Right lobe of liver (tissue), 6 donors: ENCODE measurements at regions of chr2 and their contacts with region 1.

Region 1: GRCh38 chr2:238449909-238450417 is 23.2 kb downstream of the ASB1 start:
- DNase-seq: peak; percentile 70 to 89 (median 86)
- ATAC-seq: peak; percentile 92 to 97 (median 95)
- H3K4me3 ChIP-seq: no peak overlapping the region
- H3K27ac ChIP-seq: peak overlapping the region in 2 of 3 donors; percentile 26 to 59
- H3K4me1 ChIP-seq: peaks cover 0 to 21% (median 9%) of the 10 kb centered on the region in 4 donors
- H3K27me3 ChIP-seq: no peaks in the 10 kb centered on the region
- CTCF ChIP-seq: no peak
- POLR2A ChIP-seq: peak; percentile 66

Region 2: GRCh38 chr2:238404406-238405216 is 45.4 kb before region 1 on chr2:
- intact Hi-C with region 1: loop called in 1 of 2 experiments (anchors 10 kb)
- DNase-seq: peak in 1 of 3 donors; percentile 67
- ATAC-seq: peak; percentile 71 to 81 (median 76)
- H3K4me3 ChIP-seq: peak overlapping the region in 2 of 3 donors; percentile 10 to 40
- H3K27ac ChIP-seq: peak overlapping the region in 2 of 3 donors; percentile 69 to 76
- H3K4me1 ChIP-seq: peaks cover 0 to 8% (median 3%) of the 10 kb centered on the region in 4 donors
- H3K27me3 ChIP-seq: no peaks in the 10 kb centered on the region
- CTCF ChIP-seq: no peak
- POLR2A ChIP-seq: no peak

Region 3: GRCh38 chr2:238573065-238573778 is 123.3 kb after region 1 on chr2:
- intact Hi-C with region 1: no loop called
- DNase-seq: peak in 1 of 3 donors; percentile 45
- ATAC-seq: peak; percentile 32 to 69 (median 60)
- H3K4me3 ChIP-seq: no peak overlapping the region
- H3K27ac ChIP-seq: no peak overlapping the region
- H3K4me1 ChIP-seq: no peaks in the 10 kb centered on the region
- H3K27me3 ChIP-seq: no peaks in the 10 kb centered on the region
- CTCF ChIP-seq: peak; percentile 29 to 54 (median 38)
- POLR2A ChIP-seq: no peak